ENCODE measurements at regions of chr10 and their contacts with region 1.

Region 1: GRCh38 chr10:7035126-7035761 is 375.6 kb downstream of the SFMBT2 start:
- DNase-seq: no peak
- ATAC-seq: no peak
- H3K4me3 ChIP-seq: no peak overlapping the region
- H3K27ac ChIP-seq: no peak overlapping the region
- H3K4me1 ChIP-seq: no peaks in the 10 kb centered on the region
- H3K27me3 ChIP-seq: peaks cover 0 to 3% (median 0%) of the 10 kb centered on the region in 9 donors
- CTCF ChIP-seq: no peak
- POLR2A ChIP-seq: no peak

Region 2: GRCh38 chr10:6973899-6974298 is 61.3 kb before region 1 on chr10:
- intact Hi-C with region 1: loop called in 1 of 10 experiments (anchors 10 kb)
- DNase-seq: no peak
- ATAC-seq: no peak
- H3K4me3 ChIP-seq: no peak overlapping the region
- H3K27ac ChIP-seq: peak overlapping the region in 1 of 12 donors; percentile 32
- H3K4me1 ChIP-seq: peaks cover 0 to 5% (median 0%) of the 10 kb centered on the region in 12 donors
- H3K27me3 ChIP-seq: peaks cover 0 to 5% (median 0%) of the 10 kb centered on the region in 9 donors
- CTCF ChIP-seq: no peak
- POLR2A ChIP-seq: no peak

Region 3: DNA sequence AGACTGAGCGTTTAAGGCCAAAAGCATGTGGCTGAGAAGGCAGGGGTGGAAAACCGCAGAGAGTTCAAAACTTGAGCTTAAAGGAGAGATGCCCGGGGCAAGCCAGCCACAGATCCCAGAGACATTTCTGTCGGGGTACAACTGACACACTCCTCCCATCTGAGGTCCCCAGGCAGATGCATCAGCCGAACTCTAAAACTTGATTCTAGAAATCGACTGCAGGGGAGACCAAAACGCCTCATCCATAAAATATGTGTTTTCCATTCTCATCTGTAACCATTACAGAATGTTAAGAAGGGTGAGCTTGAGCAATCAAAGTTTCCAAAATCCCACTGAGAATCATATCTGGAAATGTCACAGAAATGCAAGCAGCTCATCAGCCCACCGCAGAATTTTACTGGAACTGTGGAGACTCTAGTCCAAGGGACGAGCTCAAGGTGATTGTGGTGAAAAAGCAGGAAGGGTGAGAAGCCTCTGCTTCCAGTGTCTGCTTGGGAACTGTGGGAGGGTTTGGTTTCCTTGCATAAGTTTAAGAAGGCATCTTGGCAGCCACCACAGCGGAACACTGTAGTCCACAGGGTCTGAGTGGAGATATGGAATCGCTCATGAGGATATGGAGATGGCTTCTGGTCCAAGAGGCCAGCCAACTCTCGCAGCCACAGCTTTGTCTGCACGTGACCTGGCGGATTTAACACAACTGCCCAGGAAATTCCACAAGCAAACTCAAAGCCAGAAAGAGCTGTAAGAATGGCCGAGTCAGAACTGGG is 126.4 kb after region 1 on chr10:
- intact Hi-C with region 1: no loop called
- DNase-seq: peak in 3 of 5 donors; percentile 18 to 63 (median 40)
- ATAC-seq: peak; percentile 60 to 69 (median 62)
- H3K4me3 ChIP-seq: peak overlapping the region in 1 of 12 donors; percentile 10
- H3K27ac ChIP-seq: no peak overlapping the region
- H3K4me1 ChIP-seq: peaks cover 0 to 15% (median 0%) of the 10 kb centered on the region in 12 donors
- H3K27me3 ChIP-seq: no peaks in the 10 kb centered on the region
- CTCF ChIP-seq: no peak
- POLR2A ChIP-seq: no peak

Measured in heart left ventricle (tissue), 16 donors.